ENCODE measurements at regions of chr6 and their contacts with region 1.

Region 1: DNA sequence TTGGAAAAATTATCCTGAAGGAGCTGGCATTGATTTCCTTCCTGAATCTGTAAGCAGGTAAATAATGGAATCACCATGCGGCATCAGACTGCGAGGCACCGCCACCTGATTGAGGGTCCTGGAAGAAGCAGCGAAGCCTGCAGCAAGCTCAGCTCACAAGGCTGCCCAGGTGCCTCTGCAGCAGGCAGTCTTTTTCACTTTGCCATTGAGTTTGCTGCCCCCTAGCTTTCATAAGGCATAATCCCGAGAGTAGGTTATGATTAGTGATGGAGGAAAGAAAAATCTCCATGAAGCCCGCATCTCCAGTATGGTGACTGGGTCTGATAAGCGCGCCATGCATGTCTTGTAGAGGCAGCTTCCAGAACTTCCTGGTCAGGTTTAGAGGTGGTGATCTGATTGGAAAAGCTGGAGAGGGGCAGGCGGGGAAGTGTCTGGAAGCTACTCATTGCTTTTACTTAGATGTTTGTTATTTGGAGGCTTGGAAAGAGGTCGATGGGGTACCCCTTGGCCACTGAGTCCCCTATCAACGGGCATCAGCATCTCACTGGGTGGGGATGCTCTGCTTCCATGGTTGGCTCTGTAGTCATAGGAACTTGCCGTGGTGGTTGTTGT is 26.7 kb downstream of the IYD start:
- DNase-seq: peak in 1 of 2 donors; percentile 33
- H3K4me3 ChIP-seq: no peak overlapping the region
- H3K27ac ChIP-seq: no peak overlapping the region
- H3K4me1 ChIP-seq: no peaks in the 10 kb centered on the region
- H3K27me3 ChIP-seq: peaks cover 0 to 3% of the 10 kb centered on the region in 2 donors
- CTCF ChIP-seq: peak; percentile 57 to 60

Region 2: GRCh38 chr6:150046943-150047342 is 348.6 kb before region 1 on chr6:
- intact Hi-C with region 1: no loop called
- DNase-seq: no peak
- H3K4me3 ChIP-seq: no peak overlapping the region
- H3K27ac ChIP-seq: no peak overlapping the region
- H3K4me1 ChIP-seq: no peaks in the 10 kb centered on the region
- H3K27me3 ChIP-seq: peaks cover 0 to 21% of the 10 kb centered on the region in 2 donors
- CTCF ChIP-seq: no peak

Region 3: GRCh38 chr6:150072201-150072600 is 323.3 kb before region 1 on chr6:
- intact Hi-C with region 1: loop called (anchors 5 kb)
- DNase-seq: peak; percentile 40 to 65
- H3K4me3 ChIP-seq: no peak overlapping the region
- H3K27ac ChIP-seq: no peak overlapping the region
- H3K4me1 ChIP-seq: peaks cover 0 to 18% (median 9%) of the 10 kb centered on the region in 4 donors
- H3K27me3 ChIP-seq: peaks cover 0 to 5% of the 10 kb centered on the region in 2 donors
- CTCF ChIP-seq: no peak

Measured in tibial artery (tissue), 4 donors.